MCF 10A (cell line): ENCODE measurements at regions of chr5 and their contacts with region 1.

Region 1: GRCh38 chr5:148179234-148179824 is 11.0 kb downstream of the SPINK14 start:
- DNase-seq: peak; percentile 84
- H3K4me3 Mint-ChIP-seq: no peak overlapping the region
- H3K27ac Mint-ChIP-seq: no peak overlapping the region
- H3K4me1 Mint-ChIP-seq: no peaks in the 10 kb centered on the region
- H3K27me3 Mint-ChIP-seq: peaks cover 7% of the 10 kb centered on the region
- CTCF ChIP-seq: peak; percentile 94

Region 2: DNA sequence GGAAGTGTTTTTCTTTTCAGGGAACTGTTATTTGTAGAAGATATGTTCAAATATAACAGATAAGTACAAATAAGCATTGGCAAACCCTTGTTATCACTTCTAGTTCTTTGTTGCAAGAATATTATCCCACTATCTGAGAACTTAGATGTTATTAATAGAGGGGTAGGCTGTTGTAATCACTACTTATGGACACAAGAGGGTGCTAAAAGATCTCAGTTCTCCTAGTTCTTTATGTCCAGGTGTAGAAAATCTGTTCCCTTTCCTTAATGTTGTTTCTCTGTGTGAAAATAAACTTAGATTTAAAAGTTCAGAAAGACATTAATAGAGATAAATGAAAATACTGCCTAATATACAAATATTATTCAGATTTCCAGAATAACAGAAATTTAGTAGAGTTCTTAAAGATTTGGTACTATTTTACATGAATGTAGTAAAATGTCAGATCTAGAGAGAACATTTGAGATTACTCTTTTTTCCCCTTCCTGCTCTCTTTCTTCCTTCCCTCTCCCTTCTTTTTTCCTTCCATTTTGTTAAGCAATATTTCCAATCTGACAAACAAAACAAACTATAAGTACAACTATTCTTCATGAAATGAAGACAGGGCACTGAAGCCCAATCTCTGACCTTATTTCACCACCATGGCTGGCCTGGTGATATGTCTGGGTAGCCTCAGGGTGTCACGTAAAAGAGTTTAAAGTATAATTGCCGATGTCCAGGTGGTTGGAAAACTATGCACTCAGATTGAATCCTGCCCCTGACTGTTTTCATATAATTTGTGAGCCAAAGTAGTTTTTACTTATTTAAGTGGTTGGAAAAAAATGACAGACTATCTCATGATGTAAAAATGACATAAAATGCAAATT is 229.4 kb before region 1 on chr5:
- CTCF ChIA-PET with region 1: interaction called, 4 read pairs
- POLR2A ChIA-PET with region 1: no interaction called
- intact Hi-C with region 1: loop called (anchors 2 kb)
- DNase-seq: peak; percentile 73
- H3K4me3 Mint-ChIP-seq: no peak overlapping the region
- H3K27ac Mint-ChIP-seq: peak overlapping the region; percentile 54
- H3K4me1 Mint-ChIP-seq: peaks cover 5% of the 10 kb centered on the region
- H3K27me3 Mint-ChIP-seq: no peaks in the 10 kb centered on the region
- CTCF ChIP-seq: peak; percentile 86

Region 3: GRCh38 chr5:148290271-148291195 is 111.2 kb after region 1 on chr5:
- CTCF ChIA-PET with region 1: interaction called, 17 read pairs
- POLR2A ChIA-PET with region 1: no interaction called
- intact Hi-C with region 1: loop called (anchors 1 kb)
- DNase-seq: peak; percentile 51
- H3K4me3 Mint-ChIP-seq: no peak overlapping the region
- H3K27ac Mint-ChIP-seq: no peak overlapping the region
- H3K4me1 Mint-ChIP-seq: no peaks in the 10 kb centered on the region
- H3K27me3 Mint-ChIP-seq: no peaks in the 10 kb centered on the region
- CTCF ChIP-seq: peak; percentile 71

Region 4: DNA sequence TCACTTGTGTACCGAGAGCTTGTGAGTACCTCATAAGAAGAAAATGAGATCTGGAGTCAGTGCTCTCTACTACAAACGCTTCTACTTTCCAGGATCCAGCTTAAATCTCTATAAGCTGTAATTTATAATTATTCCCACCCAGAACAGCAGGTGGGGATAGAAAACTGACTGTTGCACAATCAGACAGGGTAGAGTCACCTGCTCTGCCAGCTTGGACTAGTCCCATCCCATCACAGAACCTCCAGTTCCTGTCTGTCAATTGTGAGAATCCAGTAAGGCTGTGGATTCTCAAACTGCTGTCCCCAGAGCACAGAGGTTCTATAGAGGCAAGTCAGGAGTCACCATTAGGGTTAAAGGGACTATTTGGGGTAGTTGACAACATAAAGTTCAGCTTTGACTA is 134.9 kb after region 1 on chr5:
- CTCF ChIA-PET with region 1: interaction called, 11 read pairs
- POLR2A ChIA-PET with region 1: no interaction called
- intact Hi-C with region 1: no loop called
- DNase-seq: peak; percentile 53
- H3K4me3 Mint-ChIP-seq: no peak overlapping the region
- H3K27ac Mint-ChIP-seq: no peak overlapping the region
- H3K4me1 Mint-ChIP-seq: no peaks in the 10 kb centered on the region
- H3K27me3 Mint-ChIP-seq: no peaks in the 10 kb centered on the region
- CTCF ChIP-seq: peak; percentile 40

Region 5: DNA sequence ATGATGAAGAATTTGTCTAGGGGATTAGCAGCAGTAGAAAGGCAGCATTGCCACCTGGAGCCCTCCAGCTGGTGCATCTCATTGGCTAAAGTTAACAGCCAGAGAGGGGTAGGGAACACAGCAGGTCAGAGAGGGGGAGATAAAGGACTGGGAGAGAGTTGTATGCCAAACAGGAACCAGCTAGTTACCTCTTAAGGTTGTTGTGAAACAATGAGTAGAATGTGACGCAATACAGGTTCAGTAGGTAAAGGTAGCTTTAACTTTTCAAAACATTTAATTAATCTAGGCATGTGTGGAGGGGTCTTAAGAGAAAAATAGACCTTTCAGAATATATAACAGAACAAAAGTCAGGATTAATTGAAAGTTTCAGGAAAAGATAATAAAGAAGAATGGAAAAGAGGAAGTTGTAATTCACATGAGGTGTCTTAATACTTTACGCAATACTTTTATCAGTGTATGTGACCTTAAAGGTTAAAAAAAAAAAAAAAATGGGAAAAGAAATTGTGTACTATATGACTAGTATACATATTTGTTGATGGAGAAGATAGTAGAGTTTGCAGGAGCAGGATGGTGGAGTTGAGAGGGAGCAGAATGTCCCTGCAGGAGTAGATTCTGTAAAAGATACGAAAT is 218.8 kb after region 1 on chr5:
- CTCF ChIA-PET with region 1: interaction called, 11 read pairs
- POLR2A ChIA-PET with region 1: no interaction called
- intact Hi-C with region 1: no loop called
- DNase-seq: peak; percentile 77
- H3K4me3 Mint-ChIP-seq: no peak overlapping the region
- H3K27ac Mint-ChIP-seq: peak overlapping the region; percentile 9
- H3K4me1 Mint-ChIP-seq: peaks cover 13% of the 10 kb centered on the region
- H3K27me3 Mint-ChIP-seq: no peaks in the 10 kb centered on the region
- CTCF ChIP-seq: no peak